ENCODE measurements at regions of chr19 and their contacts with region 1.

Region 1: GRCh38 chr19:38929929-38930775 is at the start of gene SARS2:
- DNase-seq: peak in 1 of 2 donors; percentile 97
- ATAC-seq: peak; percentile 67 to 87 (median 68)
- H3K4me3 ChIP-seq: peak within 1 kb of the TSS; percentile 71
- H3K4me3 Mint-ChIP-seq: peak within 1 kb of the TSS; percentile 96
- H3K27ac ChIP-seq: peak within 1 kb of the TSS; percentile 84
- H3K27ac Mint-ChIP-seq: peak within 1 kb of the TSS; percentile 91 to 99
- H3K4me1 ChIP-seq: peaks cover 63% of the 10 kb centered on the region
- H3K4me1 Mint-ChIP-seq: peaks cover 52 to 70% of the 10 kb centered on the region in 2 donors
- H3K27me3 ChIP-seq: no peaks in the 10 kb centered on the region
- H3K27me3 Mint-ChIP-seq: no peaks in the 10 kb centered on the region
- CTCF ChIP-seq: peak; percentile 100
- total RNA-seq, gene SARS2: 25.4 to 53.0 (median 38.9) TPM

Region 2: GRCh38 chr19:38544034-38544958 is 385.9 kb before region 1 on chr19:
- intact Hi-C with region 1: loop called (anchors 2 kb)
- DNase-seq: peak in 1 of 2 donors; percentile 78
- ATAC-seq: peak; percentile 77 to 85 (median 84)
- H3K4me3 ChIP-seq: no peak overlapping the region
- H3K4me3 Mint-ChIP-seq: peak overlapping the region; percentile 43
- H3K27ac ChIP-seq: no peak overlapping the region
- H3K27ac Mint-ChIP-seq: peak overlapping the region in 1 of 2 donors; percentile 5
- H3K4me1 ChIP-seq: peaks cover 14% of the 10 kb centered on the region
- H3K4me1 Mint-ChIP-seq: peaks cover 7 to 11% of the 10 kb centered on the region in 2 donors
- H3K27me3 ChIP-seq: no peaks in the 10 kb centered on the region
- H3K27me3 Mint-ChIP-seq: peaks cover 0 to 3% of the 10 kb centered on the region in 2 donors
- CTCF ChIP-seq: peak; percentile 66

Region 3: GRCh38 chr19:38729653-38730469 is 200.3 kb before region 1 on chr19:
- intact Hi-C with region 1: loop called (anchors 1 kb)
- DNase-seq: peak; percentile 72 to 84
- ATAC-seq: peak; percentile 18 to 52 (median 38)
- H3K4me3 ChIP-seq: no peak overlapping the region
- H3K4me3 Mint-ChIP-seq: peak overlapping the region; percentile 72
- H3K27ac ChIP-seq: no peak overlapping the region
- H3K27ac Mint-ChIP-seq: peak overlapping the region; percentile 80 to 84
- H3K4me1 ChIP-seq: peaks cover 90% of the 10 kb centered on the region
- H3K4me1 Mint-ChIP-seq: peaks cover 61 to 77% of the 10 kb centered on the region in 2 donors
- H3K27me3 ChIP-seq: no peaks in the 10 kb centered on the region
- H3K27me3 Mint-ChIP-seq: no peaks in the 10 kb centered on the region
- CTCF ChIP-seq: peak; percentile 83

Region 4: GRCh38 chr19:38831142-38831605 is 99.0 kb before region 1 on chr19:
- intact Hi-C with region 1: loop called (anchors 2 kb)
- DNase-seq: no peak
- ATAC-seq: peak; percentile 39 to 52 (median 43)
- H3K4me3 ChIP-seq: peak overlapping the region; percentile 64
- H3K4me3 Mint-ChIP-seq: peak overlapping the region; percentile 97
- H3K27ac ChIP-seq: peak overlapping the region; percentile 69
- H3K27ac Mint-ChIP-seq: peak overlapping the region; percentile 93 to 95
- H3K4me1 ChIP-seq: peaks cover 16% of the 10 kb centered on the region
- H3K4me1 Mint-ChIP-seq: peaks cover 14 to 22% of the 10 kb centered on the region in 2 donors
- H3K27me3 ChIP-seq: no peaks in the 10 kb centered on the region
- H3K27me3 Mint-ChIP-seq: no peaks in the 10 kb centered on the region
- CTCF ChIP-seq: no peak

Region 5: GRCh38 chr19:38869856-38870607 is 60.1 kb before region 1 on chr19:
- intact Hi-C with region 1: loop called (anchors 2 kb)
- DNase-seq: peak; percentile 86 to 99
- ATAC-seq: peak; percentile 71 to 91 (median 82)
- H3K4me3 ChIP-seq: peak overlapping the region; percentile 68
- H3K4me3 Mint-ChIP-seq: peak overlapping the region; percentile 92
- H3K27ac ChIP-seq: peak overlapping the region; percentile 70
- H3K27ac Mint-ChIP-seq: peak overlapping the region; percentile 80 to 94
- H3K4me1 ChIP-seq: peaks cover 41% of the 10 kb centered on the region
- H3K4me1 Mint-ChIP-seq: peaks cover 24 to 41% of the 10 kb centered on the region in 2 donors
- H3K27me3 ChIP-seq: no peaks in the 10 kb centered on the region
- H3K27me3 Mint-ChIP-seq: no peaks in the 10 kb centered on the region
- CTCF ChIP-seq: peak; percentile 95